ENCODE measurements at regions of chr4 and their contacts with region 1.

Region 1: DNA sequence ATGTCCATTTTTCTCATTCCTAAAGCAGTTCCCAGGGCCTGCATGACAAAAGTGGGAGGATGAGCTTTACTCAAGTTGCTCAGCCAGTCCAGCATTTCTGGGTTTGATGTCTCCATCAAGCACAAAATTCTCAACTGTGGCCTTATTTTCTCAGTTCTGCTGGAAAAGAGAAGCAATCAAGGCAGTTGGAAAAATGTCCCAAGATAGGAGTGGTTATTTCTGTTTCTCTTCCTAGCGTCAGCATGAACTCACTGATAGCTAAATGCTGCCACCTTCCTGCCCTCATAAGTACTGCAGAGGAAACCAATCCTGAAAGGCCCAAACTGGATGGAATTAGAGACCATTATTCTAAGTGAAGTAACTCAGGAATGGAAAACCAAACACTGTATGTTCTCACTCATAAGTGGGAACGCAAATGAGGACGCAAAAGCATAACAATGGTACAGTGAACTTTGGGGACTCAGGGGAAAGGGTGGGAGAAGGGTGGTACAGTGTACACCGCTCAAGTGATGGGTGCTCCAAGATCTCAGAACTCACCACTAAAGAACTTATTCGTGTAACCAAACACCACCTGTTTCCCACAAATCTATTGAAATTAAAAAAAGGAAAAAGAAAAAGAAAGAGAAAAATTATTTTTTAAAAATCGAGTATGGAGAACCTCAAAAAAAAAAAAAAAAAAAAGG is 29.6 kb downstream of the ADH7 start:
- DNase-seq: peak; percentile 13 to 62 (median 44)
- ATAC-seq: peak; percentile 86
- H3K4me3 ChIP-seq: no peak overlapping the region
- H3K4me3 Mint-ChIP-seq: no peak overlapping the region
- H3K27ac ChIP-seq: no peak overlapping the region
- H3K27ac Mint-ChIP-seq: no peak overlapping the region
- H3K4me1 ChIP-seq: no peaks in the 10 kb centered on the region
- H3K4me1 Mint-ChIP-seq: peaks cover 0 to 19% (median 0%) of the 10 kb centered on the region in 7 donors
- H3K27me3 ChIP-seq: no peaks in the 10 kb centered on the region
- H3K27me3 Mint-ChIP-seq: peaks cover 0 to 3% (median 0%) of the 10 kb centered on the region in 5 donors

Region 2: DNA sequence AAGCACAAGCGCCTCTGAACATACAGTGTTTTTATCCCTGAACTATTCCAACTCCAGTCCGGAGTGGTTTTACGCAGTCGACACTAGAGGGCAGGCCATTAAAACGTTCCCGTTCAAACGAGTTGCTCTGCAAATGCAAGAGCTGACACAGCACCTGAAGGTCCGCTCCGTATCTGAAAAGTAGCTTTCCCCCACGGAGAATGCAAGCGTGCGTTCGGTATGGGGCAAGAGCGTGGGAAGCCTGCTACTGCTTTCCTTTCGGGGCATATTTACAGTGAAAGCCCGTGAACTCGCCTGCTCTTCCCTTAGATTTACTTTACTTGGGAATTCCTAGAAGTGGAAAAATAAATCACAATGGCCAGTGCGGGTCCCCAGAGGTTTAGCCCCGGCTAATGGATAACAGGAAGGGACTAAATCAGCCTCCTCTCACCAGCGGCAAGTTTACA is 937.9 kb before region 1 on chr4:
- CTCF ChIA-PET with region 1: interaction called, 9 read pairs
- POLR2A ChIA-PET with region 1: no interaction called
- intact Hi-C with region 1: loop called (anchors 1 kb)
- DNase-seq: peak; percentile 14 to 76 (median 65)
- ATAC-seq: peak; percentile 93
- H3K4me3 ChIP-seq: peak overlapping the region; percentile 11
- H3K4me3 Mint-ChIP-seq: peak overlapping the region; percentile 66 to 87 (median 74)
- H3K27ac ChIP-seq: no peak overlapping the region
- H3K27ac Mint-ChIP-seq: peak overlapping the region in 3 of 9 donors; percentile 24 to 34 (median 32)
- H3K4me1 ChIP-seq: no peaks in the 10 kb centered on the region
- H3K4me1 Mint-ChIP-seq: peaks cover 7 to 40% (median 24%) of the 10 kb centered on the region in 7 donors
- H3K27me3 ChIP-seq: no peaks in the 10 kb centered on the region
- H3K27me3 Mint-ChIP-seq: no peaks in the 10 kb centered on the region

Region 3: GRCh38 chr4:98939892-98940298 is 465.7 kb before region 1 on chr4:
- CTCF ChIA-PET with region 1: interaction called, 3 read pairs
- POLR2A ChIA-PET with region 1: no interaction called
- intact Hi-C with region 1: loop called (anchors 1 to 5 kb)
- DNase-seq: peak in 5 of 9 donors; percentile 9 to 26 (median 17)
- ATAC-seq: peak; percentile 63
- H3K4me3 ChIP-seq: no peak overlapping the region
- H3K4me3 Mint-ChIP-seq: no peak overlapping the region
- H3K27ac ChIP-seq: no peak overlapping the region
- H3K27ac Mint-ChIP-seq: no peak overlapping the region
- H3K4me1 ChIP-seq: no peaks in the 10 kb centered on the region
- H3K4me1 Mint-ChIP-seq: peaks cover 4 to 15% (median 9%) of the 10 kb centered on the region in 7 donors
- H3K27me3 ChIP-seq: no peaks in the 10 kb centered on the region
- H3K27me3 Mint-ChIP-seq: no peaks in the 10 kb centered on the region

Region 4: DNA sequence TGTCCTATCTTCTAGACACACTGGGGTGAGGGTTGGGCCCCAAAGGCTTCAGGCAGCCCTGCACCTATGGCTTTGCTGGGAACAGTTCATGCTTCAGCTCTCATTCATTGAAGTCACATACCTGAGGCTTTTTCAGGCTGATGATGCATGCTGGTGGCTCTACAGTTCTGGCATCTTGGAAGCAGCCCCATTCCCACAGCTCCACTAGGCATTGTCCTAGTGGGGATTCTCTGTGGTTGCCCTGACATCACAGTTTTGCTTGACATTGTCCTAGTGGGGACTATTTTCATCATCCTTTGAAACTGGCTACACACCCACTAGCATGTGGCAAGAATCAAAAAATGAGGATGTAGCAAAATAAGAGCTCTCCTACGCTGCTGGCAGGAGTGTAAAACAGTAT is 67.6 kb after region 1 on chr4:
- CTCF ChIA-PET with region 1: no interaction called
- POLR2A ChIA-PET with region 1: no interaction called
- intact Hi-C with region 1: no loop called
- DNase-seq: no peak
- ATAC-seq: no peak
- H3K4me3 ChIP-seq: no peak overlapping the region
- H3K4me3 Mint-ChIP-seq: no peak overlapping the region
- H3K27ac ChIP-seq: no peak overlapping the region
- H3K27ac Mint-ChIP-seq: no peak overlapping the region
- H3K4me1 ChIP-seq: no peaks in the 10 kb centered on the region
- H3K4me1 Mint-ChIP-seq: peaks cover 0 to 1% (median 0%) of the 10 kb centered on the region in 7 donors
- H3K27me3 ChIP-seq: no peaks in the 10 kb centered on the region
- H3K27me3 Mint-ChIP-seq: peaks cover 0 to 4% (median 0%) of the 10 kb centered on the region in 5 donors

Region 5: DNA sequence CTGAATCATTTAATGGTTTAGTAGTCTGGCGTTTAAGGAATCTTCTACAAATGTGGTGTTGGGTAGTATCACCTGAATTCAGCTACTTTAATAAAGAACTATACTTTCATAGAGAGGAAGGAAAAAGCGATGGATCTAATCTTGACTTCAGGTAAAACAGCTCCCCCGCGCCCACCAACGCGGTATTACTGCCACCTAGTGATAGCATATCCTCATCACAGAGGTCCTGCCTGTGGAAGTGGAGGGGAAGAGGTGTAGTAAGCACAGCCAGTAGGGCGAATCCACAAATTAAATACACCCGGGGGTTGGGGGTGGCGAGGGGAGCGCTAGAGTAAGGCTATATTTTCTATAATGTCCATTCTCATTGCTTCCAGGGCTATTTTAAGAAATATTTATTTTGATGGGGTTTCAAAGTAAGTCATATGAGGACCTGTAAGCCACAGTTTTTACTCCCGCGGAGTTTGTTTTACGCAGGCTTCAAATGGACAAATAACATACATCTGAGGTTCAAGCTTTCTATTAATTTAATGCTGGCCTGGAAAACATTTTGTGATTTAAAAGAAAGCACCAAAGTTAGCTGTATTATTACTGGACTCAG is 402.8 kb after region 1 on chr4:
- CTCF ChIA-PET with region 1: no interaction called
- POLR2A ChIA-PET with region 1: no interaction called
- intact Hi-C with region 1: loop called (anchors 5 to 10 kb)
- DNase-seq: peak; percentile 28 to 78 (median 72)
- ATAC-seq: peak; percentile 92
- H3K4me3 ChIP-seq: no peak overlapping the region
- H3K4me3 Mint-ChIP-seq: no peak overlapping the region
- H3K27ac ChIP-seq: no peak overlapping the region
- H3K27ac Mint-ChIP-seq: no peak overlapping the region
- H3K4me1 ChIP-seq: no peaks in the 10 kb centered on the region
- H3K4me1 Mint-ChIP-seq: peaks cover 4 to 10% (median 5%) of the 10 kb centered on the region in 7 donors
- H3K27me3 ChIP-seq: no peaks in the 10 kb centered on the region
- H3K27me3 Mint-ChIP-seq: peaks cover 0 to 17% (median 7%) of the 10 kb centered on the region in 5 donors

Measured in naive thymus-derived CD4-positive, alpha-beta T cell (primary cell).